Activated CD4-positive, alpha-beta memory T cell treated with anti-CD3 and anti-CD28 coated beads for 36 hours (primary cell): ENCODE measurements at regions of chr5 and their contacts with region 1.

Region 1: DNA sequence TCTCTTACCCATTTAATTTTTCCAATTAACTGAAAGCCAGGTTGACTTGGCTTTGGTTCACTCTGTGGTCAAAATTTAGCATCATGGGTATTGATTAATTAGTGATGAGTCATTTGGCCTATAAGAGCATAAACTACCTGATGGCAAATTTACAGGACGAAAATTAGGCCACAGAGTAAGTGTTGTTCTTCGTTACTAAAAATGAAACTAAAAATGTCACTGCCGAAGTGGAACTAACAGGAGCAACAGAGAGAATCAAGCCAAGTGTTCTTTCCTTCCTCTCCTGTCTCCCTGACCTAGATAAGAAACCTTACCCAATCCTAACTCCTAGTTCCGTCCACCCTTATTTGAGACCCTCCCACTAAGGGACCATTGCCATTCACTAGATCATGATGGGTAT is 176.9 kb downstream of the RAB3C start:
- DNase-seq: no peak
- H3K4me3 Mint-ChIP-seq: peak overlapping the region; percentile 46
- H3K27ac Mint-ChIP-seq: no peak overlapping the region
- H3K4me1 Mint-ChIP-seq: peaks cover 36% of the 10 kb centered on the region
- H3K27me3 Mint-ChIP-seq: no peaks in the 10 kb centered on the region

Region 2: GRCh38 chr5:58215364-58215763 is 544.4 kb before region 1 on chr5:
- CTCF ChIA-PET with region 1: no interaction called
- POLR2A ChIA-PET with region 1: no interaction called
- intact Hi-C with region 1: no loop called
- DNase-seq: no peak
- H3K4me3 Mint-ChIP-seq: no peak overlapping the region
- H3K27ac Mint-ChIP-seq: no peak overlapping the region
- H3K4me1 Mint-ChIP-seq: no peaks in the 10 kb centered on the region
- H3K27me3 Mint-ChIP-seq: peaks cover 4% of the 10 kb centered on the region

Region 3: GRCh38 chr5:58595952-58596351 is 163.8 kb before region 1 on chr5:
- CTCF ChIA-PET with region 1: no interaction called
- POLR2A ChIA-PET with region 1: no interaction called
- intact Hi-C with region 1: loop called (anchors 5 kb)
- DNase-seq: no peak
- H3K4me3 Mint-ChIP-seq: no peak overlapping the region
- H3K27ac Mint-ChIP-seq: no peak overlapping the region
- H3K4me1 Mint-ChIP-seq: no peaks in the 10 kb centered on the region
- H3K27me3 Mint-ChIP-seq: peaks cover 1% of the 10 kb centered on the region

Region 4: DNA sequence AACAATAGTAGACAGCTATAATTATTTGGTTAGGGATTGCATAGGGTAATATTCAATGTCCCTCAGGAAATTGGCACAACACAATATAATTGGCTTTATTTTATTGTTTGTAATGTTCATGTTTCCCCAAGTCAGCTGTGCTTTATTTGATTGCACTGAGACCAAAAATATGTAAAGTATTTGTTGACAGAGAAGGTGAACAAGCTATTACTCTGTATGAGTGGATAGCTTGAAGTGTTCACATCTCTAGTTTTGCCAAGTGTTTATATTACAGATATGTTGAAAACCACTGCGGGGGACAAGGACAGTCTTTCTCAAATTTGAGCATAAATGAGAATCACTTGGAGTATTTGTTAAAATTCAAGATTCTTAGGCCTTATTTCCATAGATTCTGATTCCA is 93.6 kb before region 1 on chr5:
- CTCF ChIA-PET with region 1: no interaction called
- POLR2A ChIA-PET with region 1: no interaction called
- intact Hi-C with region 1: no loop called
- DNase-seq: no peak
- H3K4me3 Mint-ChIP-seq: no peak overlapping the region
- H3K27ac Mint-ChIP-seq: no peak overlapping the region
- H3K4me1 Mint-ChIP-seq: no peaks in the 10 kb centered on the region
- H3K27me3 Mint-ChIP-seq: peaks cover 1% of the 10 kb centered on the region

Region 5: GRCh38 chr5:58745350-58745749 is 14.4 kb before region 1 on chr5:
- CTCF ChIA-PET with region 1: no interaction called
- POLR2A ChIA-PET with region 1: no interaction called
- intact Hi-C with region 1: no loop called
- DNase-seq: no peak
- H3K4me3 Mint-ChIP-seq: no peak overlapping the region
- H3K27ac Mint-ChIP-seq: no peak overlapping the region
- H3K4me1 Mint-ChIP-seq: no peaks in the 10 kb centered on the region
- H3K27me3 Mint-ChIP-seq: peaks cover 6% of the 10 kb centered on the region

Region 6: GRCh38 chr5:58868931-58869330 is 109.2 kb after region 1 on chr5:
- CTCF ChIA-PET with region 1: no interaction called
- POLR2A ChIA-PET with region 1: no interaction called
- intact Hi-C with region 1: no loop called
- DNase-seq: no peak
- H3K4me3 Mint-ChIP-seq: no peak overlapping the region
- H3K27ac Mint-ChIP-seq: no peak overlapping the region
- H3K4me1 Mint-ChIP-seq: no peaks in the 10 kb centered on the region
- H3K27me3 Mint-ChIP-seq: peaks cover 6% of the 10 kb centered on the region